Activated CD4-positive, alpha-beta memory T cell treated with anti-CD3 and anti-CD28 coated beads for 36 hours (primary cell): ENCODE measurements at regions of chr9 and their contacts with region 1.

Region 1: DNA sequence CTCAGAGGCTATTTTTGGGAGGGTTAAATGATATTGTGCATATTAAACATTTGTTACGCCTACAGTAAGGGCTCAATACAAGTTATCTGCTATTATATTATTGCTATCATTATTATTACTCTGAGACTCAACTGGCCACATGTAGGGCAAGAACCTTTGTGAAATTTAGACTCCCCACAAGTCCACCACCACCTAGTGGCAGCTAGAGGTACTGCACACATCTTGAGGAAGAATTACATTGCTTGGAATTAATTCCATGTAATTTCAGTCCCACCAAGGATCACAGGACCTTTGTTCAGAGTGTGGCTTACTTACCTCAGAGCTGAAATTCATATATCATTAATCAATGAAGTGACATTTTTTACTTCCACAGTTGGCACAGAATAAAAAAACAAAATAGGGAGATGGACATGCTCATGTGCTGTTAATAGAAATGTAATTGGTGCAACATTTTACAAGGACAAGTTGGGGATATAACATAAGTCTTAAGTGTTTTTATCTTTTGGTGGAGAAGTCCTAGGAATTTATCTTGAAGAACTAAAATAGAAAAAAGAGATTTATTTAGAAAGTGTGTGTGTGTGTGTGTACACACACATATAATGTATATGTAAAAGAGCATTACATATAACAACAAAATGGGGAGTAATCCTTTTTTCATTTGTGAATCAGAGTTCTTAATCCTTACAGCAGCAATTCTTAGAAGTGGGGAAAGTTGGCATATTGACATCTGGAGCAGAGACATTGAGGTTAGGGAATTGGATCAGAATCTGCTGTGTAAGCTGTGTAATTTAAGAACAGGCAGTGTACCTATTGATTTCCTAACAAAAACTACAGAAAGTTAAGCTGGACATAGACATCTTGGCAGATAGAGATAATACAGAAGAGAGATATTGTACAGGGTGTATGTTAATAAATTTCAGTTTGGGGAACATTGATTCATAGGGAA is 11.2 kb downstream of the MSANTD3 start:
- DNase-seq: peak; percentile 68
- H3K4me3 Mint-ChIP-seq: no peak overlapping the region
- H3K27ac Mint-ChIP-seq: no peak overlapping the region
- H3K4me1 Mint-ChIP-seq: no peaks in the 10 kb centered on the region
- H3K27me3 Mint-ChIP-seq: no peaks in the 10 kb centered on the region

Region 2: GRCh38 chr9:99634186-99634585 is 803.9 kb before region 1 on chr9:
- CTCF ChIA-PET with region 1: no interaction called
- POLR2A ChIA-PET with region 1: no interaction called
- intact Hi-C with region 1: no loop called
- DNase-seq: no peak
- H3K4me3 Mint-ChIP-seq: no peak overlapping the region
- H3K27ac Mint-ChIP-seq: no peak overlapping the region
- H3K4me1 Mint-ChIP-seq: no peaks in the 10 kb centered on the region
- H3K27me3 Mint-ChIP-seq: peaks cover 5% of the 10 kb centered on the region

Region 3: GRCh38 chr9:100028201-100028784 is 409.8 kb before region 1 on chr9:
- CTCF ChIA-PET with region 1: interaction called, 3 read pairs
- POLR2A ChIA-PET with region 1: no interaction called
- intact Hi-C with region 1: loop called (anchors 5 kb)
- DNase-seq: peak; percentile 81
- H3K4me3 Mint-ChIP-seq: no peak overlapping the region
- H3K27ac Mint-ChIP-seq: no peak overlapping the region
- H3K4me1 Mint-ChIP-seq: peaks cover 7% of the 10 kb centered on the region
- H3K27me3 Mint-ChIP-seq: no peaks in the 10 kb centered on the region

Region 4: DNA sequence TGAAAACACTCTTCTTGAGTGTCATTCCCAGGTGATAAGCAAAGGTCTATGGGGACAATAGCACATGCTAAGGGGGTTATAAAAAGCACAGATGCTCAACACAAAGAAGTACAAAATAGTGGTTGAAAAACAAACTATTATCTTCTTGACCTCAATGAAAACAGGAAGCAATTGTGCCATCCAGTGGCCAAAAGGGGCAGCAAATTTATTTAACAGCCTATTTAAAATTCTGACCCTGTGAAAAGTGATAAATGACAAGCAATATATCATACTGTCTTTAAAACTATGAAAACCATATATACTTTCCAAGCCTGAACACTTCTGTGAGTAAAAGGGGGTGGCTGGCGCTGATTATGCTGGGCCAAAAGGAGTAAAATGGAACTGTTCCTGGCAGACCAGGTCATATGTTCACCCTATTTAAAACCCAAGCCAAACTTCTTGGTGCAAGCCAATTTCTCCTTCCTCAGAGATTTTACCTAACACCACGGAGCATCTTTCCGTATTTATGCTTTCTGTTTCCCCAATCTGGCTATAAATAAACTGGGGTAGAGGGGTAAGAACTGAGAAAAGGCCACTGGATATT is 115.1 kb before region 1 on chr9:
- CTCF ChIA-PET with region 1: interaction called, 15 read pairs
- POLR2A ChIA-PET with region 1: no interaction called
- intact Hi-C with region 1: no loop called
- DNase-seq: peak; percentile 24
- H3K4me3 Mint-ChIP-seq: no peak overlapping the region
- H3K27ac Mint-ChIP-seq: no peak overlapping the region
- H3K4me1 Mint-ChIP-seq: peaks cover 10% of the 10 kb centered on the region
- H3K27me3 Mint-ChIP-seq: no peaks in the 10 kb centered on the region

Region 5: GRCh38 chr9:100370064-100370723 is 67.9 kb before region 1 on chr9:
- CTCF ChIA-PET with region 1: no interaction called
- POLR2A ChIA-PET with region 1: no interaction called
- intact Hi-C with region 1: no loop called
- DNase-seq: no peak
- H3K4me3 Mint-ChIP-seq: no peak overlapping the region
- H3K27ac Mint-ChIP-seq: no peak overlapping the region
- H3K4me1 Mint-ChIP-seq: no peaks in the 10 kb centered on the region
- H3K27me3 Mint-ChIP-seq: no peaks in the 10 kb centered on the region

Region 6: GRCh38 chr9:100426530-100427428 is 11.4 kb before region 1 on chr9 and contains the start of gene MSANTD3:
- CTCF ChIA-PET with region 1: interaction called, 48 read pairs
- POLR2A ChIA-PET with region 1: interaction called, 7 read pairs
- intact Hi-C with region 1: no loop called
- DNase-seq: peak; percentile 67
- H3K4me3 Mint-ChIP-seq: peak within 1 kb of the TSS; percentile 79
- H3K27ac Mint-ChIP-seq: peak within 1 kb of the TSS; percentile 82
- H3K4me1 Mint-ChIP-seq: peaks cover 40% of the 10 kb centered on the region
- H3K27me3 Mint-ChIP-seq: peaks cover 1% of the 10 kb centered on the region
- total RNA-seq, gene MSANTD3: 16.3 to 18.3 TPM

Region 7: DNA sequence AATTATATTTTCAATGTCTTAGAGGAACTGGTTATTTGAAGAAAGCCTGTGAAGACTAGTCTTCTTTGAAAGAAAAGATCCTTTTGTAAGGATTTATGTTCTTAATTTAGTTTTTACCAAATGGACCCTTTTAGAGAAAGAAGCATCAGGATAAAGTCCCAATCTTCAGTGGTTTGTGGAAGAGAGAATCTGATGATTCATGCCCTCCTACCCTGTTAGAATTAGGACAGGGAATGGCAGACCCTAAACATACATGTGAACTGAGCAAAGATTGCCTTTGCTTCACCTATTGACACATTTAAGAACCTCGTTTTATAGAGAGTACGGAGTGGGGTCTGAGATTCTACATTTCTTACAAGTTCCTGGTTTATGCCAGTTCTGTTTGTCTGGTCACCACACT is 14.8 kb after region 1 on chr9:
- CTCF ChIA-PET with region 1: interaction called, 14 read pairs
- POLR2A ChIA-PET with region 1: no interaction called
- intact Hi-C with region 1: no loop called
- DNase-seq: no peak
- H3K4me3 Mint-ChIP-seq: no peak overlapping the region
- H3K27ac Mint-ChIP-seq: no peak overlapping the region
- H3K4me1 Mint-ChIP-seq: peaks cover 6% of the 10 kb centered on the region
- H3K27me3 Mint-ChIP-seq: no peaks in the 10 kb centered on the region

Region 8: GRCh38 chr9:100525563-100525962 is 87.4 kb after region 1 on chr9:
- CTCF ChIA-PET with region 1: no interaction called
- POLR2A ChIA-PET with region 1: no interaction called
- intact Hi-C with region 1: no loop called
- DNase-seq: no peak
- H3K4me3 Mint-ChIP-seq: no peak overlapping the region
- H3K27ac Mint-ChIP-seq: no peak overlapping the region
- H3K4me1 Mint-ChIP-seq: peaks cover 5% of the 10 kb centered on the region
- H3K27me3 Mint-ChIP-seq: no peaks in the 10 kb centered on the region